Dendritic cell treated with granulocyte-macrophage colony-stimulating factor and Interleukin-4, amounts not matched to agents 40 ng/mL and 50 ng/mL, for 4 days (primary cell): ENCODE measurements at regions of chr7 and their contacts with region 1.

Region 1: DNA sequence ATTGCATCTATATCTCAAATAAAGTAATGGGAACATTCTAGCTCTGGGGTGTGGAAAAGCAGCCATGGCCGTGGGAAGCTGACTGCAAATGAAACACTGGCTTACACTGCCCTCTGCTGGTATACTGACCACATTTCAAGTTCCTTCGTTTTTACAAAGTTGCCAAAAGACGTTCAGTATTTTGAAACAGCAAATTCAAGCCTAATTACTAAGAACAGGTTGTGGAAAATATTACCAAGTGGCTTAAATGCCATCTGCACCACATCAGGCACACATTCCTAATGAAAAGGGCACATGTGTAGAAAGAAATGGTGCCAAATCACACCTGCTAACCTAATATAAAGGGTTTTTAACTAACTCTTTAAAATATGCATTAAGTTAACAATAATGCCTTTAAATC is 83.9 kb downstream of the JAZF1 start:
- H3K4me3 Mint-ChIP-seq: no peak overlapping the region
- H3K27ac Mint-ChIP-seq: no peak overlapping the region
- H3K4me1 Mint-ChIP-seq: peaks cover 26% of the 10 kb centered on the region
- H3K27me3 Mint-ChIP-seq: no peaks in the 10 kb centered on the region

Region 2: GRCh38 chr7:27375958-27376357 is 720.8 kb before region 1 on chr7:
- intact Hi-C with region 1: no loop called
- H3K4me3 Mint-ChIP-seq: no peak overlapping the region
- H3K27ac Mint-ChIP-seq: no peak overlapping the region
- H3K4me1 Mint-ChIP-seq: peaks cover 21% of the 10 kb centered on the region
- H3K27me3 Mint-ChIP-seq: peaks cover 27% of the 10 kb centered on the region

Region 3: GRCh38 chr7:27399791-27400567 is 696.7 kb before region 1 on chr7:
- intact Hi-C with region 1: no loop called
- H3K4me3 Mint-ChIP-seq: no peak overlapping the region
- H3K27ac Mint-ChIP-seq: peak overlapping the region; percentile 46
- H3K4me1 Mint-ChIP-seq: peaks cover 36% of the 10 kb centered on the region
- H3K27me3 Mint-ChIP-seq: peaks cover 13% of the 10 kb centered on the region

Region 4: GRCh38 chr7:27532314-27532713 is 564.4 kb before region 1 on chr7:
- intact Hi-C with region 1: no loop called
- H3K4me3 Mint-ChIP-seq: no peak overlapping the region
- H3K27ac Mint-ChIP-seq: no peak overlapping the region
- H3K4me1 Mint-ChIP-seq: no peaks in the 10 kb centered on the region
- H3K27me3 Mint-ChIP-seq: no peaks in the 10 kb centered on the region

Region 5: DNA sequence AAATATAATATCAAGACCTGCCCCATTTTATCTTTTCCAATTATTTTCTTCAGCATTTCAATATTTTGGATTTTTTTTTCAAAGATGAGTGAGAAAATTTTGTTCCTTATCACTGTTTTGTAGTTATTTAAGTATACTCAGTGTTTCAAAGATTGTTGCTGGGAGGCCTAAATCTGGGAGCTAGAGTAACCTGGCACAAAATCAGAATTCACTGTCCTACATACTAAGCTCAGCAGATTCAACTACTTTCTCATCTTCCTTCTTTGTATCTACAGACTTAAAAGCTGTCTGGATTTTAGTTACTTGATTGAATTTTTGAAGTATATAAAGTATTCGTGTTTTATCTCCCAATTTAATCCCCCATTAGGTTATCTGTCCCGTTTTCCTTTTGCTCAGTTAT is 270.8 kb before region 1 on chr7:
- intact Hi-C with region 1: loop called (anchors 10 kb)
- H3K4me3 Mint-ChIP-seq: no peak overlapping the region
- H3K27ac Mint-ChIP-seq: no peak overlapping the region
- H3K4me1 Mint-ChIP-seq: no peaks in the 10 kb centered on the region
- H3K27me3 Mint-ChIP-seq: no peaks in the 10 kb centered on the region

Region 6: DNA sequence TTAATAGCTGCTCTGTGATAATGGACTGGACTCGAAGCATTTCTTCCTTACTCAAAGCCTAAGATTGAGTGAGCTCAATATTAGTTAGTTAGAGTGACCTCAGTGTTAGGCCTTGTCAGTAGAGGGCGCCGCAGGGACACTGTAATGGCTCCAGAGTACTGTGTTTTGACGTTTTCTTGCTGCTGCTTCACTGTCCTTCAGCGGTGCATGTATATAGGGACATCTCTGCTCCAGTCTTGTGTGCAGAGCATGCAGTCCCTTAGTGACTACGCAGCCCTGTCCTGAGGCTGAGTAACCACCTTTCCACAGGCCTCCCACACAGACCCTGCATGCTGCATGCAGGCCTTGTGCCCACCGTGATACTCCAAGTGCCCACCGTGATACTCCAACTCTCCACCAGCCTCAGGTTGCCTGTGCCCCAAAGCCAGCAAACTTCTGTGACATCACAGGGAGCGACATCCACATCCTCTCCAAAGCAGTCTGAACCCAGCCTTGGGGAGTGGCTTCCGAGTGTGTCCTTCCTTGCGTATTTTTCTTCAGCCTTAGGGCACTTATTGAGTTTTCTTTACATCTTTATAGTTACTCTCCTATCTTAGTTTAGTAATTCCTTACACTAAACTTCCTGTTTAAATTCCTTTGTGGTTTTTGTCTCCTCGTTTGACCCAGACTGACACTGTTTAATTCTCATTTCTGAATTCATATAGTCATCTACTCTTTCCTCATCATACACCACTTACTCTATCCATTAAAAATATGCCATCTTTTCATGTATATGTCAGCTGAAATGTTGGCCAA is 34.3 kb before region 1 on chr7:
- intact Hi-C with region 1: loop called (anchors 2 kb)
- H3K4me3 Mint-ChIP-seq: no peak overlapping the region
- H3K27ac Mint-ChIP-seq: no peak overlapping the region
- H3K4me1 Mint-ChIP-seq: peaks cover 18% of the 10 kb centered on the region
- H3K27me3 Mint-ChIP-seq: no peaks in the 10 kb centered on the region